Activated naive CD4-positive, alpha-beta T cell treated with anti-CD3 and anti-CD28 coated beads, Interleukin-2, amount 10 ng/mL, durations not matched to agents 7 days and 5 days (primary cell): ENCODE measurements at regions of chr2 and their contacts with region 1.

Region 1: GRCh38 chr2:39124000-39124745 is 3.3 kb upstream of the SOS1 start:
- DNase-seq: peak; percentile 98
- H3K4me3 Mint-ChIP-seq: peak overlapping the region; percentile 92
- H3K27ac Mint-ChIP-seq: peak overlapping the region; percentile 99
- H3K4me1 Mint-ChIP-seq: peaks cover 68% of the 10 kb centered on the region
- H3K27me3 Mint-ChIP-seq: no peaks in the 10 kb centered on the region

Region 2: GRCh38 chr2:39059366-39059952 is 64.7 kb before region 1 on chr2:
- CTCF ChIA-PET with region 1: interaction called, 15 read pairs
- DNase-seq: no peak
- H3K4me3 Mint-ChIP-seq: no peak overlapping the region
- H3K27ac Mint-ChIP-seq: peak overlapping the region; percentile 11
- H3K4me1 Mint-ChIP-seq: peaks cover 30% of the 10 kb centered on the region
- H3K27me3 Mint-ChIP-seq: no peaks in the 10 kb centered on the region

Region 3: GRCh38 chr2:39216346-39217191 is 92.4 kb after region 1 on chr2:
- CTCF ChIA-PET with region 1: interaction called, 25 read pairs
- DNase-seq: peak; percentile 92
- H3K4me3 Mint-ChIP-seq: peak overlapping the region; percentile 26
- H3K27ac Mint-ChIP-seq: peak overlapping the region; percentile 97
- H3K4me1 Mint-ChIP-seq: peaks cover 78% of the 10 kb centered on the region
- H3K27me3 Mint-ChIP-seq: no peaks in the 10 kb centered on the region